MCF 10A (cell line): ENCODE measurements at regions of chr1 and their contacts with region 1.

Region 1: GRCh38 chr1:183543619-183544204 is 46.5 kb downstream of the NCF2 start:
- DNase-seq: peak; percentile 77
- H3K4me3 Mint-ChIP-seq: no peak overlapping the region
- H3K27ac Mint-ChIP-seq: no peak overlapping the region
- H3K4me1 Mint-ChIP-seq: peaks cover 7% of the 10 kb centered on the region
- H3K27me3 Mint-ChIP-seq: no peaks in the 10 kb centered on the region
- CTCF ChIP-seq: peak; percentile 77

Region 2: GRCh38 chr1:182974506-182975191 is 569.1 kb before region 1 on chr1:
- CTCF ChIA-PET with region 1: no interaction called
- POLR2A ChIA-PET with region 1: no interaction called
- intact Hi-C with region 1: no loop called
- DNase-seq: no peak
- H3K4me3 Mint-ChIP-seq: no peak overlapping the region
- H3K27ac Mint-ChIP-seq: no peak overlapping the region
- H3K4me1 Mint-ChIP-seq: peaks cover 7% of the 10 kb centered on the region
- H3K27me3 Mint-ChIP-seq: no peaks in the 10 kb centered on the region
- CTCF ChIP-seq: no peak

Region 3: GRCh38 chr1:183159960-183160359 is 383.8 kb before region 1 on chr1:
- CTCF ChIA-PET with region 1: no interaction called
- POLR2A ChIA-PET with region 1: no interaction called
- intact Hi-C with region 1: no loop called
- DNase-seq: peak; percentile 99
- H3K4me3 Mint-ChIP-seq: peak overlapping the region; percentile 48
- H3K27ac Mint-ChIP-seq: no peak overlapping the region
- H3K4me1 Mint-ChIP-seq: peaks cover 27% of the 10 kb centered on the region
- H3K27me3 Mint-ChIP-seq: no peaks in the 10 kb centered on the region
- CTCF ChIP-seq: no peak

Region 4: DNA sequence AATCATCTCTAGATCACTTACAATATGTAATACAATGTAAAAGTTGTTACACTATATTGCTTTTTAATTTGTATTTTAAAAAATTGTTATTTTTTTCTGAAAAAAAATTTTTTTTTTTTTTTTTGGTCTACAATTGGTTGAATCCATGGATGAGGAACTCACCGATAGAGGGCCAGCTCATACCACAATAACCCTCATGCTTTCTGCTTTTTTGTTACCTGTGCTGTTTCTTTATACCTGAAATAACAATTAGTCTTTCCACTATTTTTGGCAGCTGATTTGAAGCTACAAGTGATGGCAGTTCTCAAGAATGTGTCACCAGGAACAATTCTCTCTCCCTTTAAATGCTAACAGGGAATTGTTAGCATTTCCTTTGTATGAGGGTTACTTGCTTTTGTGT is 59.5 kb before region 1 on chr1:
- CTCF ChIA-PET with region 1: interaction called, 6 read pairs
- POLR2A ChIA-PET with region 1: no interaction called
- intact Hi-C with region 1: loop called (anchors 1 kb)
- DNase-seq: peak; percentile 33
- H3K4me3 Mint-ChIP-seq: no peak overlapping the region
- H3K27ac Mint-ChIP-seq: no peak overlapping the region
- H3K4me1 Mint-ChIP-seq: peaks cover 51% of the 10 kb centered on the region
- H3K27me3 Mint-ChIP-seq: no peaks in the 10 kb centered on the region
- CTCF ChIP-seq: peak; percentile 40

Region 5: GRCh38 chr1:183498342-183498991 is 45.2 kb before region 1 on chr1:
- CTCF ChIA-PET with region 1: no interaction called
- POLR2A ChIA-PET with region 1: no interaction called
- intact Hi-C with region 1: no loop called
- DNase-seq: no peak
- H3K4me3 Mint-ChIP-seq: no peak overlapping the region
- H3K27ac Mint-ChIP-seq: no peak overlapping the region
- H3K4me1 Mint-ChIP-seq: peaks cover 18% of the 10 kb centered on the region
- H3K27me3 Mint-ChIP-seq: no peaks in the 10 kb centered on the region
- CTCF ChIP-seq: no peak

Region 6: DNA sequence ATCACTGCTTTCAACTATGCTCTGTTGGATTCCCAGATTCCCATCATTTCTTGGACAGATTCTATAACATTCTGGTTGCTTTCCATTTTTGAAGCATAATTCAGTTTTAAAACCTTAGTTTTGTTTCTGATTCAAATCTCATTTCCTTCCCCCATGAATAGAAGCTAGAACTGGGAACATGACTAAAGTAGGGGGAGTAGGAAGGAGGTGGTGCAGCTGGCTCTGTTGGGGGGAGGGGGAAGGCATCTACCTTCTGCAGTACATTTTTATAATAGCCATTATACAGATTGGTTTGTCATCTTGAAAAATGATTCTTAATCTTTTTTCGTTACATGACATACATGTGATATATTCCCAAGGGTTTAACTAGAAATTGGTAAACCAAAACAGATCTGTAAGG is 23.3 kb before region 1 on chr1:
- CTCF ChIA-PET with region 1: interaction called, 10 read pairs
- POLR2A ChIA-PET with region 1: interaction called, 5 read pairs
- intact Hi-C with region 1: no loop called
- DNase-seq: no peak
- H3K4me3 Mint-ChIP-seq: no peak overlapping the region
- H3K27ac Mint-ChIP-seq: peak overlapping the region; percentile 17
- H3K4me1 Mint-ChIP-seq: peaks cover 27% of the 10 kb centered on the region
- H3K27me3 Mint-ChIP-seq: no peaks in the 10 kb centered on the region
- CTCF ChIP-seq: no peak